Panc1 (cell line): ENCODE measurements at regions of chr12 and their contacts with region 1.

Region 1: DNA sequence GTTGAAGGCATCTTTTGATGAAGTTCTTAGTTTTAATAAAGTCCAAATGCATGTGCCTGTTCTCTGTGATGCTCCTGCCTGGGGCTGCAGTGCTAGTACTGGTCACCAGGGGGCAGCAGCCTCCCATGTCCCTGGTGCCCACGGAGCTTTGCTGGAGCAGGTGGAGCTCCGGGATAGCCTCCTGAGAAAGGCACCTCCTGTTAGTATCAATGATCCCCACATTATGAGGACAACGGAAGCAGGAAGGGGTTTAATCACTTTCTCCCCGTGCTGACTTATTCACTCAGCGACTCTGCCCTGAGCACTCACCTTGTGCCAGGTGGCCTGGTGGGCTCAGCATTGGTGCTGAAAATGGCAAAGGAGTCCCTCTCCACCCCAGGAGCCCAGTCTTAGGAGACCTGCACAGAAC is 123.0 kb upstream of the PZP start:
- DNase-seq: peak; percentile 30
- ATAC-seq: peak; percentile 87
- H3K4me3 ChIP-seq: no peak overlapping the region
- H3K27ac ChIP-seq: no peak overlapping the region
- H3K4me1 ChIP-seq: no peaks in the 10 kb centered on the region
- H3K27me3 ChIP-seq: no peaks in the 10 kb centered on the region
- CTCF ChIP-seq: peak; percentile 95

Region 2: DNA sequence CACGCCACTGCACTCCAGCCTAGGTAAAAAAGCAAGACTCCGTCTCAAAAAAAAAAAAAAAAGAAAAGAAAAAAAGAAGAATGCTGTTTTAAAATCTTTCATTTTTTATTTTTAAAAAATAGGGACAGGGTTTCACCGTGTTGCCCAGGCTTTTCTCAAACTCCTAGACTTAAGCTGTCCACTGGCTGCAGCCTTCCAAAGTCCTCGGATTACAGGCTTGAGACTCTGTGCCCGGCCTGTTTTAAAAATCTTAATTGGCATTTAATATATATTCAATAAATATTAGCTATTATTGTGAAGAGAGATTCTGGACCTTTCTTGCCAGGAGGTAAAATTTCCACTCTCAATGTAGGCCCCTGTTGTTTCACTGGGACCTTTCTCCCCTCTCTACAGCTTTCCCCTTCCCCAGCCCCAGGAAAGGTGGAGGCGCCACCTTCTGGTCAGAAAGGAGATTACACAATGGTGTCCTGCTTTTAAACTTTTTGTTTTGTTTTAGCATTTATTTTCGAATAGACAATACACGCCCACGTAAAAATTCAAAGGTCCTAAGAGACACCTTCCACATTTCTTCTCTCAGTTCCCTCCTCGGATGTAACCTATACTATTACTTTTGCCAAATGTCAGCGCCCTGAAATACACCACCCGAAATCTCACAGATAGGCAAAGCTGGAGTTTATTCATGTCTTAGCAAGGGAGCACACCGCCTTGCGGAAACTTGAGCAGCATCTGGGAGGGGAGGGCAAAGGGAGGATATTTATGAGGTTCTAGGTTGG is 440.7 kb before region 1 on chr12:
- CTCF ChIA-PET with region 1: no interaction called
- POLR2A ChIA-PET with region 1: no interaction called
- in situ Hi-C with region 1: no loop called
- intact Hi-C with region 1: no loop called
- DNase-seq: no peak
- ATAC-seq: peak; percentile 78
- H3K4me3 ChIP-seq: peak overlapping the region; percentile 40 to 53
- H3K27ac ChIP-seq: no peak overlapping the region
- H3K4me1 ChIP-seq: no peaks in the 10 kb centered on the region
- H3K27me3 ChIP-seq: no peaks in the 10 kb centered on the region; the same call in 1 of the 2 replicates
- CTCF ChIP-seq: peak; percentile 87

Region 3: GRCh38 chr12:9132008-9132535 is 199.2 kb before region 1 on chr12:
- CTCF ChIA-PET with region 1: no interaction called
- POLR2A ChIA-PET with region 1: no interaction called
- in situ Hi-C with region 1: no loop called
- intact Hi-C with region 1: no loop called
- DNase-seq: no peak
- ATAC-seq: no peak
- H3K4me3 ChIP-seq: no peak overlapping the region
- H3K27ac ChIP-seq: no peak overlapping the region
- H3K4me1 ChIP-seq: no peaks in the 10 kb centered on the region
- H3K27me3 ChIP-seq: 0 out of 2 replicates have a peak, but pooled peaks cover 2% of the 10 kb centered on the region
- CTCF ChIP-seq: no peak

Region 4: GRCh38 chr12:9347328-9348127 is 16.3 kb after region 1 on chr12:
- CTCF ChIA-PET with region 1: interaction called, 10 read pairs
- POLR2A ChIA-PET with region 1: no interaction called
- in situ Hi-C with region 1: no loop called
- intact Hi-C with region 1: no loop called
- DNase-seq: no peak
- ATAC-seq: no peak
- H3K4me3 ChIP-seq: no peak overlapping the region
- H3K27ac ChIP-seq: no peak overlapping the region
- H3K4me1 ChIP-seq: no peaks in the 10 kb centered on the region
- H3K27me3 ChIP-seq: no peaks in the 10 kb centered on the region
- CTCF ChIP-seq: no peak

Region 5: DNA sequence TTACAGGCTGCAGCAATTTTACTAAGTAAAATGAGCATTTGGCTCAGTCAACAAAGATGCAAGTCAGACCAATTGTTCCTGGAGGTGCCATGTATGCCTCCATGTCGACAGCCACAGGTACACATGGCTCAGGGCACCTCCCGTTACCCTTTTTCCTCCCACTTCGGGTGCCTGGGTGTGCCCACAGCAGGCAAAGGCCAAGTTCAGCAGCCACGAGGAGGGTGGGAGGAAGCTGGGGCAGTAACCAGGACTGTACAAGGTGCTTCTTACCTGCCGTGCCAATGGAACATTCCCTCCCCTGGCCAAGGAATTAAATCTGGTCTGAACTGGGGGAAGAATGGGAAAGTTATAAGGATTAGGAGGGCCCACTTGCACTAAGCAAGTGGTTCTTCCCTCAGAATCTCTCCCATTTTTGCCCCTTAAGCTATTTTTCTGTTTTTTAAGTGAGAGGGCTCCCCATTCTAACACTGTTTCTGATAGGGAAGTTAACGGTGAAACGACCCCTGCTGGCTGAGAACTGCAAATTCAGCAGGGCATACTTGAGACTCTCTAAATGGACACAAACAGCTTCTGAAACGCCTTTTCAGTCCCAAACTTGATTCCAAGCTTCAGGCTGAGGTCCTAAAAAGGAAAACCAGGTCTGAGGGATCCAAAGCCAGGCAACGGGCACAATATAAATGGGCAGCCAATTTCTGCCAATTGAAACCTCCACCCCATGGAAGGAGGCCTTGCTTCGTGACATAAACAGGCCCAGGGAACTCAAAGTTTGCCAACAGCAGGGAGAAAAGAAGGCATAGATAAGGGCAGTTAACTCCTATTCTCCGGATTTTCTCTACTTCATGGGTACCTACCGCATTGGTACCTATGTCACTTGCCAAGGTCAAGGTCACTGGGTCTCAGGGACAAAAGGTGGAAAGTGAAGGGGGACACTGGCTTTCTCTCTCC is 376.9 kb after region 1 on chr12:
- CTCF ChIA-PET with region 1: no interaction called
- POLR2A ChIA-PET with region 1: no interaction called
- in situ Hi-C with region 1: no loop called
- intact Hi-C with region 1: loop called (anchors 10 kb)
- DNase-seq: no peak
- ATAC-seq: peak; percentile 80; the same call in 1 of the 2 replicates
- H3K4me3 ChIP-seq: no peak overlapping the region
- H3K27ac ChIP-seq: no peak overlapping the region
- H3K4me1 ChIP-seq: no peaks in the 10 kb centered on the region
- H3K27me3 ChIP-seq: no peaks in the 10 kb centered on the region
- CTCF ChIP-seq: peak; percentile 78